ENCODE measurements at regions of chr13 and their contacts with region 1.

Region 1: GRCh38 chr13:33355201-33355895 is 69.8 kb upstream of the STARD13 start:
- DNase-seq: peak; percentile 55
- ATAC-seq: peak; percentile 50
- H3K4me3 ChIP-seq: no peak overlapping the region
- H3K27ac ChIP-seq: peak overlapping the region; percentile 23; the same call in 1 of the 2 replicates
- H3K4me1 ChIP-seq: peaks cover 3% of the 10 kb centered on the region
- H3K27me3 ChIP-seq: no peaks in the 10 kb centered on the region
- CTCF ChIP-seq: no peak
- POLR2A ChIP-seq: no peak
- RAD21 ChIP-seq: no peak

Region 2: GRCh38 chr13:33642374-33643068 is 287.2 kb after region 1 on chr13:
- CTCF ChIA-PET with region 1: no interaction called
- POLR2A ChIA-PET with region 1: interaction called, 11 read pairs
- dilution Hi-C with region 1: no loop called
- in situ Hi-C with region 1: no loop called
- intact Hi-C with region 1: no loop called
- DNase-seq: peak; percentile 72
- ATAC-seq: peak; percentile 65
- H3K4me3 ChIP-seq: no peak overlapping the region
- H3K27ac ChIP-seq: peak overlapping the region; percentile 78
- H3K4me1 ChIP-seq: peaks cover 25% of the 10 kb centered on the region
- H3K27me3 ChIP-seq: no peaks in the 10 kb centered on the region
- CTCF ChIP-seq: no peak
- POLR2A ChIP-seq: no peak
- RAD21 ChIP-seq: no peak